CD4-positive, alpha-beta T cell (primary cell): ENCODE measurements at regions of chr11 and their contacts with region 1.

Region 1: DNA sequence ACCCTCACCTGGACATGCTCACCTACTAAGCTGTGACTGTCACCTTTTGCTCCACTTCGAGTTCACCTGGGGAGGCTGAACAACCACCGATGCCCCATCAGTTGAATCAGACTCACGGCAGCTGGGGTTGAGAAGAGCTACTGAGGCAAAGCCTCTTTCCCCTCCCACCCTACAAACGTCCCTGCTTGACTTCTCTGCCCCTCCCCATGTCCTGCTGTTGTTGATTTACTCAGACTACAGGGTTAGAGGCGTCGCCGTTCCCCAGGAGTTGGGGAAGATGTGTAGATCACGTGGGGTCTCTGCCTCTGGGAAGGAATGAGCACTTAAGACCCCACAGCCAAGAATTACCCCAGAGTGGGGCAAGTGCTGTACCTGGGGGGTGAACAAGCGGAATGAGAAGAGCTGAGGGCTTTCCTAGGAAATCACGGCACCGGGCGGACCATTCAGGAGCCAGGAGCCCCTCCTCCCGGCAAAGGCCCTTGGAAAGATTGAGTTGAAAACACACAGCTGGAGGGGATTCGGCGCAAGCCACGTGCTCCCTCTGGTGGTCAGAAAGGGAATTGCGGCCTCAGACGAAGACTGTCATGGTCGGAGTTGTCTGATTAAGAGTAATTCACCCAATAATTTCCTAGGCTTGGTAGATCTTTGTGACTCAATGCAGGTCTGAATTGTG is 7.0 kb downstream of the FXYD2 start:
- DNase-seq: peak; percentile 70 to 92 (median 84)
- ATAC-seq: peak; percentile 16
- H3K4me3 ChIP-seq: no peak overlapping the region
- H3K4me3 Mint-ChIP-seq: peak overlapping the region; percentile 38
- H3K27ac ChIP-seq: no peak overlapping the region
- H3K27ac Mint-ChIP-seq: peak overlapping the region; percentile 87
- H3K4me1 ChIP-seq: peaks cover 67% of the 10 kb centered on the region
- H3K4me1 Mint-ChIP-seq: peaks cover 50% of the 10 kb centered on the region
- H3K27me3 ChIP-seq: no peaks in the 10 kb centered on the region
- H3K27me3 Mint-ChIP-seq: no peaks in the 10 kb centered on the region
- CTCF ChIP-seq: peak; percentile 97

Region 2: GRCh38 chr11:117828611-117829368 is 11.3 kb after region 1 on chr11:
- CTCF ChIA-PET with region 1: interaction called, 18 read pairs
- POLR2A ChIA-PET with region 1: interaction called, 7 read pairs
- intact Hi-C with region 1: no loop called
- DNase-seq: peak; percentile 36 to 92 (median 82)
- ATAC-seq: peak; percentile 87
- H3K4me3 ChIP-seq: no peak overlapping the region
- H3K4me3 Mint-ChIP-seq: peak overlapping the region; percentile 45
- H3K27ac ChIP-seq: peak overlapping the region in 1 of 2 donors; percentile 29
- H3K27ac Mint-ChIP-seq: peak overlapping the region; percentile 83
- H3K4me1 ChIP-seq: peaks cover 56% of the 10 kb centered on the region
- H3K4me1 Mint-ChIP-seq: peaks cover 54% of the 10 kb centered on the region
- H3K27me3 ChIP-seq: no peaks in the 10 kb centered on the region
- H3K27me3 Mint-ChIP-seq: no peaks in the 10 kb centered on the region
- CTCF ChIP-seq: no peak